ENCODE measurements at regions of chr15 and their contacts with region 1.

Region 1: GRCh38 chr15:99207672-99208071 is 41.7 kb downstream of the TTC23 start:
- DNase-seq: no peak
- H3K4me3 ChIP-seq: no peak overlapping the region
- H3K27ac ChIP-seq: no peak overlapping the region
- H3K4me1 ChIP-seq: peaks cover 0 to 9% (median 0%) of the 10 kb centered on the region in 4 donors
- H3K27me3 ChIP-seq: no peaks in the 10 kb centered on the region
- CTCF ChIP-seq: no peak
- EP300 ChIP-seq: no peak
- POLR2A ChIP-seq: no peak

Region 2: DNA sequence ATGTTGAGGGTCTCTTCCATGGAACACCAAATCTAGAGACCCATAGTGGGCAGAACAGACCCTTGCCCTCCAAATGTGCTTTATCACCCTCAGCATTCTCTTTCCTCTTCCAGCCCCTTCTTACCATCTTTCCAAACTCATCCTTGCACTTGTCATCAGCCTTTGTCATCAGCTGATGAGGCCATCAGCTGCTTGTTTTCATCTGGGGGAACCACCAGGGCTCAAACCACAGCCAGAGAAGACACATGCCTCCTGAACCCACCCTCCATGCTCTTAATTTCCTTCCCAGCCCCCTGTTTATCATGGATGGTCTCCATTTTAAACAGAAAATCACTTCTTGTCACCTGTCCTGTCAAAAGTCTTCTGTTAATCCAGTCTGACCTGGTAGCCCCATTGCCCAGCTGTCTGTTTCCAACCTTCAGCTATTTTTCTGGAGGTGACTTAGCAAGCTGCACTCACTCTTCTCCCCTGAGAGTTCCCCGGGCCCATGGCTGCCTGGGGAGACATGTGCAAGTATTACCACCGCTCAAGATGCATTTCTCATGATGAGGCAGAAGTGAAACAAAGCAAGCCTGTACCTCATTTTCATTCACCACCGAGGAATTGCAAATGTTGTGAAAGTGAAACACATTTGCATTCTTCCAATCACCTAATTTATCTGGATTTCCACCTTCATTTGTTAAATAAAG is 117.5 kb before region 1 on chr15:
- in situ Hi-C with region 1: loop called in 1 of 4 experiments (anchors 10 kb)
- intact Hi-C with region 1: no loop called
- DNase-seq: peak; percentile 26
- H3K4me3 ChIP-seq: no peak overlapping the region
- H3K27ac ChIP-seq: no peak overlapping the region
- H3K4me1 ChIP-seq: no peaks in the 10 kb centered on the region
- H3K27me3 ChIP-seq: no peaks in the 10 kb centered on the region
- CTCF ChIP-seq: no peak
- EP300 ChIP-seq: no peak
- POLR2A ChIP-seq: no peak